Sigmoid colon (tissue), 7 donors: ENCODE measurements at regions of chrX and their contacts with region 1.

Region 1: DNA sequence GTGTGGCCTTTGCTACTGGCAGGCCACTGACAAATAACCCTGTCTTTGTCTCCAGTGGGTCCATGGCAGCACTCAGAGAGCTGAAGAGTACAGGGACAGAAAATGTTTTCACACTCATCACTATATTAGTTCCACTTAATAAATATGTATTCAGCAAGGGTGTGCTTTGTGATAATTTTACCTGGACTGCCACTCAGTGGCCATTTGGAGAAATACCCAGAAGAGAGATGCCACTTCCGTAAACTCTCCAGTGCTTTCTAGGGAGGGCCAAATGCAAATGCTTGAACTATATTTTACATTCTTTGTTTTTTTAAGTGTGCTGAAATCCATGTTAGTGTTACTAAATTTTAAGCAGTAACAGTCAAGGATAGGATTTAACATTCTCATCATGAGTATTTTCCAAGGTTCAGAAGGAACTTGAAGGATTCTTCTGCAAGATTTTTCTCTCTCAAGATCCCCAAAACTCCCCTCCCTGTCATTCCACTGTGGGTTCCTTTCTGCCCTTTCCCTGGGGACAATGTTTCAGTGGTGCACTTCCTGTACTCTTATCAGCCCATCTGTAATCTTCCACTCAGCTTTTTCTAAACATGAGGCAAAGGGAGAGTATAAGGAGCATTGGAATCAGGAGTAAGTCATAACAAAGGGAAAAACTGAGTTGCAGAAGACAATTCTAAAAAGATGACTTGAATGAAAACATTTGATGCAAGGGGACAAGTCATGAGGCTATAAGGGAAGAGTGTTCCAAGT is 46.0 kb downstream of the TFDP3 start:
- DNase-seq: no peak
- H3K4me3 ChIP-seq: no peak overlapping the region
- H3K27ac ChIP-seq: no peak overlapping the region
- H3K4me1 ChIP-seq: no peaks in the 10 kb centered on the region
- H3K27me3 ChIP-seq: no peaks in the 10 kb centered on the region
- CTCF ChIP-seq: peak in 3 of 4 experiments; percentile 10 to 34 (median 12)
- EP300 ChIP-seq: no peak
- POLR2A ChIP-seq: no peak

Region 2: DNA sequence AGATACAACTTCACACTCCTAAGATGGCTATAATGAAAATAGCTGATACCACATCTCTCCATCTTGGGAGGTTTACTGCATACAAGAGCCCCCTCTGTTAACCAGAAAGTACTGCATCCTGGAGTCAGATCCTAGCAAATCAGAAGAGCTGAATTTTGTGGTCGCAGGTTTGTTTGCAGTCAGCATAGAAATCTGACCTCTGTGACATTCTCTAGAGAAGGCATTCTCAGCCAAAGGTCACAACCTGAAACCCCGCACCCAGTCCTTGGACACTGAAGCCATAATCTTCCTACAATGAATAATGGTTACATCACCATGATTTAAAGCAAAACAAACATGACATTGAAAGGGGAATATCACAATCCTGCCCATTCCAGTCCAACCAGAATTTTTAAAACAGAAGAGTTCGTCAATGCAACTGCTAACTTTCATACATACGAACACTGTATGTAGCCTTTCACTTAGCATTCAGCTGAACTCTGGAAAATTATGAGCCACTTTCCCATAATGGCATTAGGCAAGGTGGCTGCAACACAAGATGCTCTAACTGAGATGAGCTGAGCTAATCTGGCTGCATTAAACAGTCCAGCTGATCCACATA is 231.3 kb before region 1 on chrX:
- intact Hi-C with region 1: no loop called
- DNase-seq: no peak
- H3K4me3 ChIP-seq: no peak overlapping the region
- H3K27ac ChIP-seq: no peak overlapping the region
- H3K4me1 ChIP-seq: no peaks in the 10 kb centered on the region
- H3K27me3 ChIP-seq: no peaks in the 10 kb centered on the region
- CTCF ChIP-seq: no peak
- EP300 ChIP-seq: no peak
- POLR2A ChIP-seq: no peak

Region 3: GRCh38 chrX:132968296-132968949 is 203.7 kb before region 1 on chrX:
- intact Hi-C with region 1: loop called (anchors 10 kb)
- DNase-seq: no peak
- H3K4me3 ChIP-seq: no peak overlapping the region
- H3K27ac ChIP-seq: no peak overlapping the region
- H3K4me1 ChIP-seq: no peaks in the 10 kb centered on the region
- H3K27me3 ChIP-seq: no peaks in the 10 kb centered on the region
- CTCF ChIP-seq: no peak
- EP300 ChIP-seq: no peak
- POLR2A ChIP-seq: no peak

Region 4: DNA sequence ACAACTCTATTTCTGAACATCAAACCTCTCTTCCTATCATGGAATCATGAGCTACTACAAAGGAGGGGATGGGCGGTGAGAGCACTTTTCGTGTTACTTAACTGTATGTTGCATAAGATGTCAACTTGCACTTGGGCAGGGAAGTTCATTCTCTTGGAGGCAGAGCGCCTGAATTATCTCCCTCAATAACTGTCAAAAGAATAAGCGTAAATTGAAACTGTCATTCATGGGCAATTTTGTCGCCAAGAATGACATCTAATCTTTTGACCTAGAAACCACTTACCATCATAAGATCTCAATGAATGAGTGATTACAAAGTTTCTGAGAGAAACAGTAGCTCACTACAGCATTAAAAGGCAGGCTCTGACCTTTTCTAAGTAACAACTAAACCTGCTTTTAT is 51.7 kb before region 1 on chrX:
- intact Hi-C with region 1: no loop called
- DNase-seq: no peak
- H3K4me3 ChIP-seq: no peak overlapping the region
- H3K27ac ChIP-seq: no peak overlapping the region
- H3K4me1 ChIP-seq: no peaks in the 10 kb centered on the region
- H3K27me3 ChIP-seq: no peaks in the 10 kb centered on the region
- CTCF ChIP-seq: no peak
- EP300 ChIP-seq: no peak
- POLR2A ChIP-seq: no peak